Naive thymus-derived CD4-positive, alpha-beta T cell (primary cell): ENCODE measurements at regions of chr22 and their contacts with region 1.

Region 1: DNA sequence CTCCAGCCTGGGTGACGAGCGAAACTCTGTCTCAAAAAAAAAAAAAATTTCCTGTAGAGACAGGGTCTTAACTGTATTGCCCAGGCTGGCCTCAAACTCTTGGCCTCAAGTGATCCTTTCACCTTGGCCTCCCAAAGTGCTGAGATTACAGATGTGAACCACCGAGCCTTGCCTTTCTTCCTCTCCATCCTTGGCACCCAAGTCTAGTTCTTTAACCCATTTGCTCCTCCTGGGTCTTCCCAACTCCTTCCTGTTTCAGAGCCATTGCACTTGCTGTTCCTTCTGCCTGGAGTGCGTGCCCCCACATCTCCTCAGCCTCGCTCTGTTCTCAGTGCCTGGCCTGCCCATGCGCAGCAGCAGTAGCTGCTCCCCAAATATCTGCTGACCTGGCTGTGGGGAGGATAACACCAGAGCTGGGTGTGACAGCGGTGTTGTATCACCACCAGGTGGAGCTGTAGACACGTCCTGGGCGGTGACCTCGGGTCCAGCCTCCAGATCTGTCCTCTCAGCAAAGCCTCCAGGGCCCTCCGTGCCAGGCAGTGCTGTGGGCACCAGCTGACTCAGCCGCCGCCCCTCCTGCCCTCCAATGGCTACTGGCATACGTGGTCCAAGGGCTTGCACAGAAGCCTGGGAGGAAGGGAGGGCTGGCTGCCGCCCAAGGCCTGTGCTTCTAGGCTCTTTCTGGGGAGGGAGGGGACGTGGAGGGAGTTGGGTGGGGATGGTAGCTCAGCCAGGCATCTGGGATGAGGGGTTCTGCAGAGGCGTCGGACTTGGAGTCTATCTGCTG is 22.0 kb downstream of the TEF start:
- DNase-seq: peak; percentile 60 to 83 (median 79)
- ATAC-seq: peak; percentile 100
- H3K4me3 ChIP-seq: no peak overlapping the region
- H3K4me3 Mint-ChIP-seq: peak overlapping the region in 2 of 10 donors; percentile 4 to 65
- H3K27ac ChIP-seq: peak overlapping the region; percentile 26
- H3K27ac Mint-ChIP-seq: peak overlapping the region in 5 of 9 donors; percentile 3 to 76 (median 6)
- H3K4me1 ChIP-seq: peaks cover 0 to 7% of the 10 kb centered on the region in 2 donors
- H3K4me1 Mint-ChIP-seq: peaks cover 2 to 11% (median 4%) of the 10 kb centered on the region in 7 donors
- H3K27me3 ChIP-seq: no peaks in the 10 kb centered on the region
- H3K27me3 Mint-ChIP-seq: no peaks in the 10 kb centered on the region

Region 2: GRCh38 chr22:41417622-41418390 is 14.1 kb after region 1 on chr22:
- CTCF ChIA-PET with region 1: no interaction called
- POLR2A ChIA-PET with region 1: no interaction called
- intact Hi-C with region 1: no loop called
- DNase-seq: no peak
- ATAC-seq: no peak
- H3K4me3 ChIP-seq: no peak overlapping the region
- H3K4me3 Mint-ChIP-seq: no peak overlapping the region
- H3K27ac ChIP-seq: no peak overlapping the region
- H3K27ac Mint-ChIP-seq: peak overlapping the region in 3 of 9 donors; percentile 21 to 62 (median 33)
- H3K4me1 ChIP-seq: peaks cover 12 to 16% of the 10 kb centered on the region in 2 donors
- H3K4me1 Mint-ChIP-seq: peaks cover 8 to 26% (median 23%) of the 10 kb centered on the region in 7 donors
- H3K27me3 ChIP-seq: no peaks in the 10 kb centered on the region
- H3K27me3 Mint-ChIP-seq: no peaks in the 10 kb centered on the region

Region 3: GRCh38 chr22:41461901-41462300 is 58.2 kb after region 1 on chr22:
- CTCF ChIA-PET with region 1: no interaction called
- POLR2A ChIA-PET with region 1: no interaction called
- intact Hi-C with region 1: no loop called
- DNase-seq: no peak
- ATAC-seq: no peak
- H3K4me3 ChIP-seq: no peak overlapping the region
- H3K4me3 Mint-ChIP-seq: no peak overlapping the region
- H3K27ac ChIP-seq: no peak overlapping the region
- H3K27ac Mint-ChIP-seq: no peak overlapping the region
- H3K4me1 ChIP-seq: no peaks in the 10 kb centered on the region
- H3K4me1 Mint-ChIP-seq: peaks cover 0 to 22% (median 16%) of the 10 kb centered on the region in 7 donors
- H3K27me3 ChIP-seq: no peaks in the 10 kb centered on the region
- H3K27me3 Mint-ChIP-seq: no peaks in the 10 kb centered on the region

Region 4: DNA sequence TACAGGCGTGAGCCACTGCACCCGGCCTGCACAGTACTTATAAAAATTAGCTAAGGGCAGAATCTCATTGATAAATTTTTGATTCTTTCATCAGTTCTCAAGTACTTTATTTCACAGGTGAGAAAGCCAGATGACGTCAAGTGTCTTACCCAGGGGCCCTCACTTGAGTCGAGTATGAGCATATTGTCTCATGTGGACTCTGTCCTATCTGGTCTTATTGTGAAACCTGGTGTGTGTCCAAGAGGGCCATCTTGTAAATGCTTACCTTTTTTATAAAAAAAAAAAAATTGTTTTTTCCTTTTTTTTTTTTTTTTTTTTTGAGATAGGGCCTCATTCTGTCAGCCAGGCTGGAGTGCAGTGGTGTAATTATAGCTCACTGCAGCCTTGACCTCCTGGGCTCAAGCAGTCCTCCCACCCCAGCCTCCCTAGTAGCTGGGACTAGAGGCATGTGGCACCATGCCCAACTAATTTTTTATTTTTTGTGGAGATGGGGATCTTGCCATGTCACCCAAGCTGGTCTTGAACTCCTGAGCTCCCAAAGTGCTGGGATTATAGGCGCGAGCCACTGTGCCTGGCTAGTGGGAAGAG is 71.2 kb after region 1 on chr22:
- CTCF ChIA-PET with region 1: no interaction called
- POLR2A ChIA-PET with region 1: no interaction called
- intact Hi-C with region 1: no loop called
- DNase-seq: no peak
- ATAC-seq: no peak
- H3K4me3 ChIP-seq: no peak overlapping the region
- H3K4me3 Mint-ChIP-seq: no peak overlapping the region
- H3K27ac ChIP-seq: no peak overlapping the region
- H3K27ac Mint-ChIP-seq: no peak overlapping the region
- H3K4me1 ChIP-seq: peaks cover 4 to 10% of the 10 kb centered on the region in 2 donors
- H3K4me1 Mint-ChIP-seq: peaks cover 13 to 46% (median 35%) of the 10 kb centered on the region in 7 donors
- H3K27me3 ChIP-seq: no peaks in the 10 kb centered on the region
- H3K27me3 Mint-ChIP-seq: no peaks in the 10 kb centered on the region

Region 5: GRCh38 chr22:41501209-41501608 is 97.5 kb after region 1 on chr22:
- CTCF ChIA-PET with region 1: interaction called, 29 read pairs
- POLR2A ChIA-PET with region 1: interaction called, 4 read pairs
- intact Hi-C with region 1: loop called (anchors 1 kb)
- DNase-seq: peak in 4 of 9 donors; percentile 20 to 32 (median 24)
- ATAC-seq: peak; percentile 67
- H3K4me3 ChIP-seq: no peak overlapping the region
- H3K4me3 Mint-ChIP-seq: no peak overlapping the region
- H3K27ac ChIP-seq: no peak overlapping the region
- H3K27ac Mint-ChIP-seq: peak overlapping the region in 1 of 9 donors; percentile 41
- H3K4me1 ChIP-seq: no peaks in the 10 kb centered on the region
- H3K4me1 Mint-ChIP-seq: peaks cover 0 to 8% (median 1%) of the 10 kb centered on the region in 7 donors
- H3K27me3 ChIP-seq: no peaks in the 10 kb centered on the region
- H3K27me3 Mint-ChIP-seq: no peaks in the 10 kb centered on the region

Region 6: GRCh38 chr22:41517172-41518047 is 113.7 kb after region 1 on chr22:
- CTCF ChIA-PET with region 1: interaction called, 67 read pairs
- POLR2A ChIA-PET with region 1: no interaction called
- intact Hi-C with region 1: loop called (anchors 1 kb)
- DNase-seq: peak in 3 of 9 donors; percentile 26 to 43 (median 41)
- ATAC-seq: no peak
- H3K4me3 ChIP-seq: no peak overlapping the region
- H3K4me3 Mint-ChIP-seq: no peak overlapping the region
- H3K27ac ChIP-seq: no peak overlapping the region
- H3K27ac Mint-ChIP-seq: peak overlapping the region in 1 of 9 donors; percentile 14
- H3K4me1 ChIP-seq: no peaks in the 10 kb centered on the region
- H3K4me1 Mint-ChIP-seq: peaks cover 0 to 2% (median 0%) of the 10 kb centered on the region in 7 donors
- H3K27me3 ChIP-seq: no peaks in the 10 kb centered on the region
- H3K27me3 Mint-ChIP-seq: no peaks in the 10 kb centered on the region

Region 7: GRCh38 chr22:41526837-41527799 is 123.4 kb after region 1 on chr22:
- CTCF ChIA-PET with region 1: interaction called, 77 read pairs
- POLR2A ChIA-PET with region 1: interaction called, 8 read pairs
- intact Hi-C with region 1: loop called (anchors 1 kb)
- DNase-seq: peak; percentile 36 to 75 (median 64)
- ATAC-seq: peak; percentile 78
- H3K4me3 ChIP-seq: no peak overlapping the region
- H3K4me3 Mint-ChIP-seq: no peak overlapping the region
- H3K27ac ChIP-seq: peak overlapping the region; percentile 48
- H3K27ac Mint-ChIP-seq: peak overlapping the region in 7 of 9 donors; percentile 40 to 84 (median 77)
- H3K4me1 ChIP-seq: peaks cover 10 to 16% of the 10 kb centered on the region in 2 donors
- H3K4me1 Mint-ChIP-seq: peaks cover 0 to 25% (median 20%) of the 10 kb centered on the region in 7 donors
- H3K27me3 ChIP-seq: no peaks in the 10 kb centered on the region
- H3K27me3 Mint-ChIP-seq: no peaks in the 10 kb centered on the region

Region 8: GRCh38 chr22:41532908-41533825 is 129.4 kb after region 1 on chr22:
- CTCF ChIA-PET with region 1: interaction called, 77 read pairs
- POLR2A ChIA-PET with region 1: interaction called, 3 read pairs
- intact Hi-C with region 1: loop called in 1 of 2 experiments (anchors 1 kb)
- DNase-seq: peak in 8 of 9 donors; percentile 39 to 68 (median 46)
- ATAC-seq: peak; percentile 83
- H3K4me3 ChIP-seq: no peak overlapping the region
- H3K4me3 Mint-ChIP-seq: no peak overlapping the region
- H3K27ac ChIP-seq: peak overlapping the region; percentile 42
- H3K27ac Mint-ChIP-seq: peak overlapping the region in 6 of 9 donors; percentile 31 to 76 (median 48)
- H3K4me1 ChIP-seq: no peaks in the 10 kb centered on the region
- H3K4me1 Mint-ChIP-seq: peaks cover 0 to 12% (median 4%) of the 10 kb centered on the region in 7 donors
- H3K27me3 ChIP-seq: no peaks in the 10 kb centered on the region
- H3K27me3 Mint-ChIP-seq: no peaks in the 10 kb centered on the region

Region 9: DNA sequence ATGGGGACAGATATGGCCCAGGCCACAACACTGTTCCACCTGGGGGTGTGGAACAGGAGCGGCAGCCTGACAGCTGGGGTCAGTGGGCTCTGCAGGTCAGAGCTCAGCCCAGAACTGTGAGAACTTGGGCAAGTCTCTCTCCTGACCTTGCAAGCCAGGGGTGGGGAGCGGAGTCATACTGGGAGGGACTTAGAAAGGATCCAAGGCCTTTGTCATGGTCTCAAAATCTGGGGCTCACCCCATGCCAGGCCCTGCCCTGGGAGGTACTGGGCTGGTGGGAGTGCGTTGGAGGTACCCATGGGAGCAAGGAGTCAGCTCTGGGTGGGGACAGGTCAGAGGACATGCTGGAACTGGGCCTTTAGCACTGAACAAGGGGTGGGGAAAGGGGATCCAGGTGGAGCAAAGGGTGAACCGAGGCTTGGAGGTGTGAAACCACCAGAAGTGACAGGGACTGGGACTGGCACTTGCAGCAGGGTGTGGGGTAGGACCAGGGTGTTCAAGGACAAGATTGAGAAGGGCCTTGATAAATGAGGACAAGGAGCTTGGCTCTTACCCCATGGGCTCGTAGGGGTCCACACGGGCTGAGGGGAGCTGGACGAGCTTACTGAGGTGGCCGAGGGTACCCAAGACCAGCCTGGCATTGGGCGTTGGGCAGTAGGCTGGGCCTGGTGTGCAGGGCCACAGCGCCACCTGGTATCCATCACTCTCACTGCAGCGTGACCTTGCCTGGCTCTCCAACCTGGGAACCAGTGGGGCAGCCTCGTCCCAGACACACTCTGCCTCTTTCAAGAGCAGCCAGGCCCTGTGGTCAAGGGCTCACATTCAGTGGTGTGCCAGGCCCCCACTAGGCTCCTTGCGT is 193.3 kb after region 1 on chr22:
- CTCF ChIA-PET with region 1: interaction called, 3 read pairs
- POLR2A ChIA-PET with region 1: no interaction called
- intact Hi-C with region 1: loop called in 1 of 2 experiments (anchors 1 kb)
- DNase-seq: peak in 6 of 9 donors; percentile 17 to 43 (median 28)
- ATAC-seq: peak; percentile 85
- H3K4me3 ChIP-seq: no peak overlapping the region
- H3K4me3 Mint-ChIP-seq: no peak overlapping the region
- H3K27ac ChIP-seq: no peak overlapping the region
- H3K27ac Mint-ChIP-seq: no peak overlapping the region
- H3K4me1 ChIP-seq: no peaks in the 10 kb centered on the region
- H3K4me1 Mint-ChIP-seq: peaks cover 0 to 6% (median 0%) of the 10 kb centered on the region in 7 donors
- H3K27me3 ChIP-seq: no peaks in the 10 kb centered on the region
- H3K27me3 Mint-ChIP-seq: no peaks in the 10 kb centered on the region